ENCODE measurements at regions of chr17 and their contacts with region 1.

Region 1: GRCh38 chr17:27181935-27182334 is 112.0 kb upstream of the WSB1 start:
- DNase-seq: no peak
- ATAC-seq: no peak
- H3K4me3 ChIP-seq: no peak overlapping the region
- H3K4me3 Mint-ChIP-seq: no peak overlapping the region
- H3K27ac ChIP-seq: peak overlapping the region in 1 of 2 donors; percentile 64
- H3K27ac Mint-ChIP-seq: peak overlapping the region; percentile 83
- H3K4me1 ChIP-seq: peaks cover 10 to 15% of the 10 kb centered on the region in 2 donors
- H3K4me1 Mint-ChIP-seq: peaks cover 12% of the 10 kb centered on the region
- H3K27me3 ChIP-seq: no peaks in the 10 kb centered on the region
- H3K27me3 Mint-ChIP-seq: no peaks in the 10 kb centered on the region
- CTCF ChIP-seq: no peak

Region 2: DNA sequence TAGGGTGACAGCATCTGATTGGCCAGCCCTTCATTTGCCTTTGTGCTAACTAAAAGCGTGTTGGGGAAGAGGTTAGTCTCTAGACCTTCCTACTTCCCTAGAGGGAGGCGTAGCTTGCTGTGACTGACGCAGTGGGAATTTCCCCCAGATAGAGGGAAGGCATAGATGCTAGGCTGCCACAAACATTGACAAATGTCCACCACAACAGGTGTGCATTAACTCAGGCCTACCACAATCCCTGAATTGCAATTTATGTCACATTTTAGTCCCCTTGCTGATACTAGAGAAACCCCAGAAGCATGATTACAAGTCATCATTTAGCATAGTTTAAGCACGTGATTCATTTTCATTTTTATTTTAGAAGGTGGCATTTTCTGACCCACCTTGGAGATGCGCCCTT is 35.7 kb after region 1 on chr17:
- CTCF ChIA-PET with region 1: no interaction called
- POLR2A ChIA-PET with region 1: no interaction called
- intact Hi-C with region 1: loop called (anchors 2 kb)
- DNase-seq: peak; percentile 94
- ATAC-seq: peak; percentile 85
- H3K4me3 ChIP-seq: peak overlapping the region in 1 of 5 experiments; percentile 9
- H3K4me3 Mint-ChIP-seq: peak overlapping the region; percentile 64
- H3K27ac ChIP-seq: peak overlapping the region; percentile 85 to 98
- H3K27ac Mint-ChIP-seq: peak overlapping the region; percentile 96
- H3K4me1 ChIP-seq: peaks cover 34 to 41% of the 10 kb centered on the region in 2 donors
- H3K4me1 Mint-ChIP-seq: peaks cover 48% of the 10 kb centered on the region
- H3K27me3 ChIP-seq: no peaks in the 10 kb centered on the region
- H3K27me3 Mint-ChIP-seq: no peaks in the 10 kb centered on the region
- CTCF ChIP-seq: no peak